ENCODE measurements at regions of chr14 and their contacts with region 1.

Region 1: GRCh38 chr14:64704143-64704742 is at the start of gene PLEKHG3:
- DNase-seq: peak; percentile 63
- H3K4me3 Mint-ChIP-seq: peak within 1 kb of the TSS; percentile 86
- H3K27ac Mint-ChIP-seq: peak within 1 kb of the TSS; percentile 84
- H3K4me1 Mint-ChIP-seq: peaks cover 80% of the 10 kb centered on the region
- H3K27me3 Mint-ChIP-seq: peaks cover 13% of the 10 kb centered on the region
- total RNA-seq, gene PLEKHG3: 126 to 133 TPM

Region 2: GRCh38 chr14:64623554-64624165 is 80.6 kb before region 1 on chr14:
- CTCF ChIA-PET with region 1: no interaction called
- POLR2A ChIA-PET with region 1: no interaction called
- DNase-seq: peak; percentile 19
- H3K4me3 Mint-ChIP-seq: no peak overlapping the region
- H3K27ac Mint-ChIP-seq: no peak overlapping the region
- H3K4me1 Mint-ChIP-seq: peaks cover 12% of the 10 kb centered on the region
- H3K27me3 Mint-ChIP-seq: peaks cover 13% of the 10 kb centered on the region

Region 3: GRCh38 chr14:64645220-64645892 is 58.9 kb before region 1 on chr14:
- CTCF ChIA-PET with region 1: no interaction called
- POLR2A ChIA-PET with region 1: no interaction called
- DNase-seq: no peak
- H3K4me3 Mint-ChIP-seq: no peak overlapping the region
- H3K27ac Mint-ChIP-seq: no peak overlapping the region
- H3K4me1 Mint-ChIP-seq: no peaks in the 10 kb centered on the region
- H3K27me3 Mint-ChIP-seq: peaks cover 25% of the 10 kb centered on the region

Region 4: DNA sequence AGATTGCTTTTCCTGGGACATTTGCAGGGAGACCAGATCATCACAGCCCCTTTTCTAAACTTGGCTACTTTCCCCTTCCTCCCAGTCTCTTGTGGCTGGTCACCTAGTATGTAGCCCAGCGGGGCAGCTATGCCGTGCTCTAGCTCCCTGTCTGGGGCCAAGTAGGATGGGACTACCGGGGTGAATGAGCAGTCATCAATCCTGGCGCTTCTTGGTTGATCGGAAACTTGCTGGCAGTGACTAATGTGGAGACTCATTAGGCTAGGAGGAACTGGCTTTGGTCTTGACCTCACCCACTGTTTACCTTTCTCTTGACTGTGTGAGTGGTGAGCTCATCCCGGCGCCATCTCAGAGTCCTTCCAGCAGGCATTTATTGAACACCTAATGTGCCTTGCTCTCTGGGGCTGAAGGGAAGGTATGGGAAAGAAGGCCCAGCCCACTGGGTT is 15.9 kb after region 1 on chr14:
- CTCF ChIA-PET with region 1: interaction called, 30 read pairs
- POLR2A ChIA-PET with region 1: interaction called, 230 read pairs
- DNase-seq: no peak
- H3K4me3 Mint-ChIP-seq: no peak overlapping the region
- H3K27ac Mint-ChIP-seq: peak overlapping the region; percentile 96
- H3K4me1 Mint-ChIP-seq: peaks cover 98% of the 10 kb centered on the region
- H3K27me3 Mint-ChIP-seq: no peaks in the 10 kb centered on the region

Region 5: DNA sequence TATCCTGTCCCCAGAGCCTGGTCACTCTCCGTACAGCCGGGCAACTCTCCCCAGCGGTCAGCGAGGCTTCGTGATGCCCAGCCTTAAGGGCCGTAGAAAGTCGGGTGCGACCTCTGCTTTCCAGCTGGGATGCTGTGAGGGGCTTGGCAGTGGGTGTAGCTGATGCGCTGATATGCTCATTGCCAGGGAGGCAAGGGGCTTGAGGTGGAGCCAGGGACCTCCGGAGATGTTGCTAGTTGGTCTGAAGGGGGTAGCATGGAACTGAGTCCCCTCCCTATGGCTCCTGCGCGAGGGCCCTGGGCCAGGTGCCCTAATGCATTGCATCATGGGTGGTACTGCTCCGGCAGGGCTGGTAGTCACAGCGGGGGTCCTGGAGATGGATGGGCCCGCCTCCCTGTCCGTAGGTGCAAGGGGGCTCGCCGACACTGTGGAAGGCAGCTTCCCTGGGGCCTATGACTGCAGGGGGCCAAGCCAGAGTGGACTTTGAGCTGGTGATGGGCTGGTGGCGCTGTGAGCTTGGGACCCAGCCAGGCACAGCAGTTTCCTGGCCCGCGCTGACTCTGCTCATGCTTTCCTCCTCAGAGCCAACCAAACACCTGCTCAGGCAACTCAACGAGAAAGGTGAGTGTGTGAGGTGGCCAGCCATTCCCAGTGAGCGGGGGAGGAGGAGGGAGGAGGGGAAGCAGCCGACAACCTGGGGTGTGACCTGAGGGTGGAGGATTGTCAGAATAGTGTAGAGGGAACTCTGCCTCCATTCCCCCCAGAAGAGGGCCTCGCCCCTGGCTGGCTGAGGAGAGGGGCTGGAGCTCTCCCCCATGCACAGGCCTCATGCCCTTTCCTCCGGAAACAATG is 32.3 kb after region 1 on chr14:
- CTCF ChIA-PET with region 1: interaction called, 5 read pairs
- POLR2A ChIA-PET with region 1: interaction called, 16 read pairs
- DNase-seq: no peak
- H3K4me3 Mint-ChIP-seq: no peak overlapping the region
- H3K27ac Mint-ChIP-seq: no peak overlapping the region
- H3K4me1 Mint-ChIP-seq: peaks cover 32% of the 10 kb centered on the region
- H3K27me3 Mint-ChIP-seq: no peaks in the 10 kb centered on the region

Region 6: GRCh38 chr14:64757601-64758000 is 53.4 kb after region 1 on chr14:
- CTCF ChIA-PET with region 1: interaction called, 9 read pairs
- POLR2A ChIA-PET with region 1: interaction called, 16 read pairs
- DNase-seq: no peak
- H3K4me3 Mint-ChIP-seq: no peak overlapping the region
- H3K27ac Mint-ChIP-seq: peak overlapping the region; percentile 95
- H3K4me1 Mint-ChIP-seq: peaks cover 84% of the 10 kb centered on the region
- H3K27me3 Mint-ChIP-seq: peaks cover 8% of the 10 kb centered on the region

Region 7: GRCh38 chr14:64919622-64920021 is 215.4 kb after region 1 on chr14:
- CTCF ChIA-PET with region 1: no interaction called
- POLR2A ChIA-PET with region 1: no interaction called
- DNase-seq: no peak
- H3K4me3 Mint-ChIP-seq: no peak overlapping the region
- H3K27ac Mint-ChIP-seq: no peak overlapping the region
- H3K4me1 Mint-ChIP-seq: peaks cover 49% of the 10 kb centered on the region
- H3K27me3 Mint-ChIP-seq: no peaks in the 10 kb centered on the region

Measured in activated CD4-positive, alpha-beta memory T cell treated with anti-CD3 and anti-CD28 coated beads, Interleukin-2, amount 10 ng/mL, durations not matched to agents 7 days and 5 days (primary cell).